ENCODE measurements at regions of chr18 and their contacts with region 1.

Region 1: DNA sequence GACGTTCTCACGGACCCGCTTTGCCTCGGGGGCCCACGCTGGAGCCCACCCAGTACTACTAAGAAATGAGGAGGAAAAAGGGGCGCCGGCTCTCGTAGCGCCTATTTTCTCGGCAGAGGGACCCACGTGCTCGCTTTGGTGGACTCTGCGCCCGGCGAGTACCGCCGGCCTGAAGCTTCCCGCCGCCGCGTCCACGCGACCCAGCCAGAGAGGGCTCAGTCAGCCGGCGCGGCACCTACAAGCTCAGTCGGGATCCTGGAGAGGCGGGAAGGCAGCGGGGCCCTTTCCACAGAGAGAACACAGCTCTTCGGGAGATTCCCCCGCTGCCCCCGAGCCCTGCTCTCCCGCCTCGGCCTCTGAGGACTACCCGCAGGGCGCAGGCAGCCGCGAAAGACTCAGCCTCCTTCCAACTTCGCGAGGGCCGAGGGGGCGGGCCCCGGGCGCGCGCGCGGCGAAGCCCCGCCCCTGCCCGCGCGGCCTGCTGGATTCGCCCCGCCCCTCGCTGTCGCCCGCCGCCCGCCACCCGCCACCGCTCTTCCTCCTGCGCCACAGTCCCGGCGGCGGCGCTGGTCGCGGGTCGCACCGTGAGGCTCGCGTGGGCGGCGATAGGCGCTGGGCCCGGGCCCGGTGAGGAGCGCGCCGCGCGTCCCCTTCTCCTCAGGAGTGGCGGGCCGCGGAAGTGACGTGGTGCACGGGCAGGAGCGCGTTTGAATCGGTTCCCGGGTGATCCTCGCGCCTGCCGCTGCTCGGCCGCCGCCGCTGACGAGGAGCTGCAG is at the start of gene SMCHD1:
- DNase-seq: peak; percentile 76 to 98 (median 89)

Region 2: GRCh38 chr18:2571200-2572143 is 83.9 kb before region 1 on chr18 and contains the starts of genes METTL4 and NDC80:
- intact Hi-C with region 1: loop called (anchors 1 kb)
- DNase-seq: peak; percentile 69 to 97 (median 80)

Region 3: GRCh38 chr18:3012964-3013804 is 357.8 kb after region 1 on chr18 and contains the start of gene LPIN2:
- intact Hi-C with region 1: loop called (anchors 10 kb)
- DNase-seq: peak; percentile 90 to 99 (median 95)

Region 4: GRCh38 chr18:3029215-3029952 is 374.0 kb after region 1 on chr18:
- intact Hi-C with region 1: no loop called
- DNase-seq: peak in 1 of 10 donors; percentile 34

Measured in posterior cingulate gyrus (tissue), 11 donors.